ENCODE measurements at regions of chr6 and their contacts with region 1.

Region 1: DNA sequence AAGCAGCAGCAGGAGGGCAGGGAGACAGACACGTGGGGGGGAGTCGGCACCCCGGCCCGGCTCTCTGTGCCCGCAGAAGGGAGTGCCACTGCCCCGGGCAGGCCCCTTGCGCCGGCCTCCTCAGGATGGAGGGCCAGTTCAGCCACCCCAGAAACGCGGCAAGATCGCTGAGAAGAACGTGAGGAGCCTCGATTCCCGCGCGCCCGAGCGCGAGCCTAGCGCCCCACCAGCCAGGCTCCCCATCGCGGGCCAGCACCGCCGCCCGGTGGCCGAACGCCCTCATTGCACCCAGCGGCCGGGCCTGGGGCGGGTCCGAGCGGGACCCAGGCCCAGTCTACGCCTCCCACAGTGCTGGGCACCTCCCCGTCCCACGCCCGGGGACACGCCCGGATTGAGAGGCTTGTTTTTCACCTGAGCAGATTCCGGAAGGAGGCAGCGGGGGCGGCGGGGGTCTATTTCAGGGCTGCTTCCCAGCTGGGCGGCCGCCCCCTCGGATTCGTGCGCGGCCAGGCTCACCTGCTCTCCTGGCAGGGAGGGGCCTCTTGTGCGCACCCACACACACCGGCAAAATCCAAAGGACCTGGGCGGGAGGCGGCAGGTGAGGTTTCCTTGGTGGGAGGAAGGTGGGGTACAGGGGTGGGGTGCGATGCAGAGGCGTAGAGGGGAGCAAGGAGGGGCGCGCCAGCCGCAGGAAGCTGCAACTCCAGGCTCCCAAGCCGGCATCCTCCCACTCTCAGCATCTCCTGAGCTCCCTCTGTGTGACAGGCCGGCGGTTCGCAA is 9.0 kb upstream of the GRM4 start:
- DNase-seq: peak; percentile 76
- ATAC-seq: peak; percentile 94
- H3K4me3 ChIP-seq: peak overlapping the region in 3 of 5 experiments; percentile 33 to 39 (median 36)
- H3K4me3 Mint-ChIP-seq: peak overlapping the region; percentile 55
- H3K27ac ChIP-seq: no peak overlapping the region
- H3K27ac Mint-ChIP-seq: no peak overlapping the region
- H3K4me1 ChIP-seq: peaks cover 14 to 21% of the 10 kb centered on the region in 2 donors
- H3K4me1 Mint-ChIP-seq: peaks cover 16% of the 10 kb centered on the region
- H3K27me3 ChIP-seq: peaks cover 0 to 46% (median 18%) of the 10 kb centered on the region in 4 experiments
- H3K27me3 Mint-ChIP-seq: peaks cover 42% of the 10 kb centered on the region
- CTCF ChIP-seq: peak; percentile 99

Region 2: DNA sequence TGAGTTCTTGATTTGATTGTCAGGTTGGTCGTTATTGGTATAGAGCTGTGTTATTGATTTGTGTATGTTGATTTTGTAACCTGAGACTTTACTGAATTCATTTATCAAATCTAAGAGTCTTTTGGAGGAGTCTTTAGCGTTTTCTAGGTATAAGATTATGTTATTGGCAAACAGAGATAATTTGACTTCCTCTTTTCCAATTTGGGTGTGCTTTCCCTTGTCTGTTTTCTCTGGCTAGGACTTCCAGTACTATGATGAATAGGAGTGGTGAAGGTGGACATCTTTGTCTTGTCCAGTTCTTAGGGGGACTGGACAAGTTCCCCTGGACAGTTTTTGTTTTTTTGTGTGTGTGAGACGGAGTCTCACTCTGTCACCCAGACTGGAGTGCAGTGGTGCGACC is 1162.9 kb before region 1 on chr6:
- CTCF ChIA-PET with region 1: no interaction called
- POLR2A ChIA-PET with region 1: no interaction called
- intact Hi-C with region 1: loop called (anchors 10 kb)
- DNase-seq: no peak
- ATAC-seq: no peak
- H3K4me3 ChIP-seq: no peak overlapping the region
- H3K4me3 Mint-ChIP-seq: no peak overlapping the region
- H3K27ac ChIP-seq: no peak overlapping the region
- H3K27ac Mint-ChIP-seq: no peak overlapping the region
- H3K4me1 ChIP-seq: no peaks in the 10 kb centered on the region
- H3K4me1 Mint-ChIP-seq: peaks cover 3% of the 10 kb centered on the region
- H3K27me3 ChIP-seq: no peaks in the 10 kb centered on the region
- H3K27me3 Mint-ChIP-seq: peaks cover 4% of the 10 kb centered on the region
- CTCF ChIP-seq: no peak

Region 3: DNA sequence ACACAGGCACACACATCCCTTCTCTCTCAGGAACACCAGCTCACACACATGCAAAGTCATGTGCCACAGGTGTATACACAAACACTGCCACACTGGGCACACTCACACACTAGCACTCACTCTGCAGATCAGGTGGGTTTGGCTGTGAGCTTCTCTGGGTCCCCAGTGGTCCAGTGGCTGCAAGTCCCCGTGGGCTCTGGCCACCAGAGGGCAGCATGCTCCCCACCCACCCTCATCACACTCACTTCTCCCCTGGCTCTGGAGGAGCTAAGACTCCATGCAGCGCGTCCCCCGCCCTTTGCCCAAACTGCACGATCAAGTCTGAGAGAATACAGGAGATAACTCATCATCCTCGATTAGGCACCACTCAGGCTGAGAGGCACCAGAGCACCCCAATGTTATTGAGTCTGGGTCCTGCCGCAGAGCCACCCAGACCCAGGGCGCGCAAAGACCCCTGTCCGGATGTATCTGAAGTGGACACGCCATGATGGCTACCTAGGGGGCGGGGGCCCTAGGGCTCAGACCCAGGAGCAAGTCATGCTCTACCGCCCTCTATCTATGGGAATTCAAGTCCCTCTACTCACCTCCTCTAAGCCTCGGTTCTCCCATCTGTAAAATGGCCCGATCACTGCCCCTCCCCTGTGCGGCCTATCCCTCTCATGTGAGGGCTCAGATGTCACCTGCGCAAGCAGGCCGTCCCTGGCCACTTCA is 99.5 kb before region 1 on chr6:
- CTCF ChIA-PET with region 1: interaction called, 76 read pairs
- POLR2A ChIA-PET with region 1: interaction called, 4 read pairs
- intact Hi-C with region 1: no loop called
- DNase-seq: peak; percentile 76
- ATAC-seq: peak; percentile 73
- H3K4me3 ChIP-seq: no peak overlapping the region
- H3K4me3 Mint-ChIP-seq: no peak overlapping the region
- H3K27ac ChIP-seq: no peak overlapping the region
- H3K27ac Mint-ChIP-seq: no peak overlapping the region
- H3K4me1 ChIP-seq: no peaks in the 10 kb centered on the region
- H3K4me1 Mint-ChIP-seq: no peaks in the 10 kb centered on the region
- H3K27me3 ChIP-seq: peaks cover 0 to 11% (median 1%) of the 10 kb centered on the region in 4 experiments
- H3K27me3 Mint-ChIP-seq: peaks cover 26% of the 10 kb centered on the region
- CTCF ChIP-seq: peak; percentile 86